ENCODE measurements at regions of chr3 and their contacts with region 1.

Region 1: GRCh38 chr3:16048435-16049318 is 125.8 kb upstream of the GALNT15 start:
- DNase-seq: peak; percentile 83
- H3K4me3 Mint-ChIP-seq: peak overlapping the region; percentile 17
- H3K27ac Mint-ChIP-seq: no peak overlapping the region
- H3K4me1 Mint-ChIP-seq: peaks cover 4% of the 10 kb centered on the region
- H3K27me3 Mint-ChIP-seq: peaks cover 4% of the 10 kb centered on the region

Region 2: GRCh38 chr3:15923640-15924405 is 124.9 kb before region 1 on chr3:
- intact Hi-C with region 1: no loop called
- DNase-seq: no peak
- H3K4me3 Mint-ChIP-seq: no peak overlapping the region
- H3K27ac Mint-ChIP-seq: no peak overlapping the region
- H3K4me1 Mint-ChIP-seq: peaks cover 2% of the 10 kb centered on the region
- H3K27me3 Mint-ChIP-seq: peaks cover 11% of the 10 kb centered on the region

Region 3: DNA sequence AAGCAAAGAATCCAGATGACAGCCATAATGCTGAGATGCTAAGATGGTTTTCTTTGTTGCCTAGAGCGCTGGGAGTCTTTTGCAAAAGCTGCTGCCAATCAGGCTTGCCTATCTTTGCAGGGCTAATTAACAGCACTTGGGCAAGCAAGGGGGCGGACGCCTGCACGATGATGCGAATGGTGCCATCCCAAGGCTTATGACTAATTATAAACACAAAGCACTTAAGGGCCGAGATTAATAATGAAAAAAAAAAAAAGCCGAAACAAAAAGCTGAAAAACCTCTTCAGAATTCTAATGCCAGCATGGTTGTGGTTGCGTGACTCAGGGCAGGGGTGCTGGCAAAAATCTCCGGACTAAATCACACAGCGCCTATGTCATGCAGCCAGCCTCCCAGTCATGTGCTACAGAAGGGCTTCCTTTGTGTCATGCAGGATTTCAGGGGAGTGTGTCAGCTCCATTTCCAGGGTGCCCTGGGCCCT is 66.0 kb before region 1 on chr3:
- intact Hi-C with region 1: no loop called
- DNase-seq: no peak
- H3K4me3 Mint-ChIP-seq: no peak overlapping the region
- H3K27ac Mint-ChIP-seq: no peak overlapping the region
- H3K4me1 Mint-ChIP-seq: no peaks in the 10 kb centered on the region
- H3K27me3 Mint-ChIP-seq: peaks cover 6% of the 10 kb centered on the region

Region 4: DNA sequence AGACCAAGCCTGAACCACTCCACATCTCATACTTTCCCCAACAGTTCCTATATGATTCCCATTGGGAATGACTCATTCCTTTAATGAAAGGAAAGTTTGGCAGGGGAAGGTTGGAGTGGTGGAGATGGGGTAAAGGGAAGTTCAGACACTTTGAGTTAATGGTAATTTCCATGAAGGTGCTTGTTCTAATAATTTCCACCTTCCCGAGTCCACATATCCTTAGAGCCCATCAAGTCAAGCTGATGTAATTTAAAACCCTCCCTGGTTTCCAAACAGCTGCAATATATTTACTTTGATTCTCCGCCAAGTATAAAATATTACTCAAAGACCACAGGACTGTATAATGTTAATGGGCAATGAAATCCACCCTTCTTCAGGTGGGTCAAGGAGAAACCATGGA is 30.8 kb after region 1 on chr3:
- intact Hi-C with region 1: no loop called
- DNase-seq: no peak
- H3K4me3 Mint-ChIP-seq: no peak overlapping the region
- H3K27ac Mint-ChIP-seq: no peak overlapping the region
- H3K4me1 Mint-ChIP-seq: no peaks in the 10 kb centered on the region
- H3K27me3 Mint-ChIP-seq: no peaks in the 10 kb centered on the region

Region 5: GRCh38 chr3:16177962-16178627 is 129.4 kb after region 1 on chr3:
- intact Hi-C with region 1: loop called (anchors 1 kb)
- DNase-seq: peak; percentile 90
- H3K4me3 Mint-ChIP-seq: no peak overlapping the region
- H3K27ac Mint-ChIP-seq: no peak overlapping the region
- H3K4me1 Mint-ChIP-seq: peaks cover 3% of the 10 kb centered on the region
- H3K27me3 Mint-ChIP-seq: peaks cover 26% of the 10 kb centered on the region

Measured in activated CD4-positive, alpha-beta T cell treated with anti-CD3 and anti-CD28 coated beads, Interleukin-2, amount 10 ng/mL, durations not matched to agents 24 days and 14 days (primary cell).